Esophagus muscularis mucosa (tissue), 4 donors: ENCODE measurements at regions of chr18 and their contacts with region 1.

Region 1: DNA sequence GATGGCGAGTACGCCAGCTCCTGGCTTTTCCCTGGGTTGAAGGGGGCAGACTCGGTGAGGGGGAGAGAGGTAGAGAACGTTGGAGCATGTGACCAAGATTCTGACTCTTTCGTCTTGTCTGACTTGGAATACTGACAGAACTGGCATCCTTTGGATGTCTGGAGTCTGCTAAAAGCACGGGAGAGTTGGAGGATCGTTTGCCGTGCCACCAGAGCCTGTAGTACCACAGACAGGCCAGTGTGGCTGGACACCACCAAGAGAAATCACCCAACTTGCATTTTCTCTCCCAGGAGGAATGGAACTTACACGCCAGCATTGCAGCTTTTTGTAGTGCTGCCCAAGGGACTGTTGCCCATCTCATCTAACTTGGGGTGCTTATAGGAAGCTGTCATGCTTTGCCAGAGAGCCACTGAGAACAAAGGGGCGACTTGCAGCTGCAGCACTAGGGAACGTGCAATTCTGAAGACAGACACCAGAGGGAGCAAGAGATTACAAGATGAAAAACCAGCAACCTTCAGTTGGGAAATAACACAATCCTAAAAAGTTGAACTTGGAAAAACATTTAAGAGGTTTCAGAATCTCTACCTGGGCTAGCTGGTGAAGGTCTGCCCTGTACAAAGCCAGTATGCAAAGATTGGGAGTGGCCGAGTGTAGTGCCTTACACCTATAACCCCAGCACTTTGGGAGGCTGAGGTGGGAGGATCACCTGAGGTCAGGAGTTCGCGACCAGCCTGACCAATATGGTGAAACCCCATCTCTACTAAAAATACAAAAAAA is 24.1 kb downstream of the PSMG2 start:
- DNase-seq: no peak
- H3K4me3 ChIP-seq: no peak overlapping the region
- H3K27ac ChIP-seq: no peak overlapping the region
- H3K4me1 ChIP-seq: no peaks in the 10 kb centered on the region
- H3K27me3 ChIP-seq: no peaks in the 10 kb centered on the region
- CTCF ChIP-seq: peak; percentile 87 to 94 (median 92)
- EP300 ChIP-seq: no peak
- POLR2A ChIP-seq: no peak

Region 2: GRCh38 chr18:12934454-12935071 is 207.6 kb after region 1 on chr18:
- intact Hi-C with region 1: loop called (anchors 2 kb)
- DNase-seq: no peak
- H3K4me3 ChIP-seq: no peak overlapping the region
- H3K27ac ChIP-seq: no peak overlapping the region
- H3K4me1 ChIP-seq: peaks cover 0 to 9% (median 8%) of the 10 kb centered on the region in 4 donors
- H3K27me3 ChIP-seq: no peaks in the 10 kb centered on the region
- CTCF ChIP-seq: peak; percentile 83 to 91 (median 85)
- EP300 ChIP-seq: no peak
- POLR2A ChIP-seq: no peak